MCF 10A (cell line): ENCODE measurements at regions of chr2 and their contacts with region 1.

Region 1: GRCh38 chr2:74250189-74250631 is 51.8 kb downstream of the MTHFD2 start:
- DNase-seq: peak; percentile 49
- H3K4me3 Mint-ChIP-seq: no peak overlapping the region
- H3K27ac Mint-ChIP-seq: no peak overlapping the region
- H3K4me1 Mint-ChIP-seq: peaks cover 5% of the 10 kb centered on the region
- H3K27me3 Mint-ChIP-seq: peaks cover 11% of the 10 kb centered on the region
- CTCF ChIP-seq: peak; percentile 70

Region 2: GRCh38 chr2:74037379-74037860 is 212.8 kb before region 1 on chr2:
- CTCF ChIA-PET with region 1: no interaction called
- POLR2A ChIA-PET with region 1: no interaction called
- intact Hi-C with region 1: no loop called
- DNase-seq: no peak
- H3K4me3 Mint-ChIP-seq: no peak overlapping the region
- H3K27ac Mint-ChIP-seq: peak overlapping the region; percentile 60
- H3K4me1 Mint-ChIP-seq: peaks cover 9% of the 10 kb centered on the region
- H3K27me3 Mint-ChIP-seq: no peaks in the 10 kb centered on the region
- CTCF ChIP-seq: no peak

Region 3: GRCh38 chr2:74238879-74239278 is 11.3 kb before region 1 on chr2:
- CTCF ChIA-PET with region 1: interaction called, 23 read pairs
- POLR2A ChIA-PET with region 1: no interaction called
- intact Hi-C with region 1: no loop called
- DNase-seq: peak; percentile 96
- H3K4me3 Mint-ChIP-seq: no peak overlapping the region
- H3K27ac Mint-ChIP-seq: peak overlapping the region; percentile 42
- H3K4me1 Mint-ChIP-seq: peaks cover 24% of the 10 kb centered on the region
- H3K27me3 Mint-ChIP-seq: no peaks in the 10 kb centered on the region
- CTCF ChIP-seq: no peak

Region 4: DNA sequence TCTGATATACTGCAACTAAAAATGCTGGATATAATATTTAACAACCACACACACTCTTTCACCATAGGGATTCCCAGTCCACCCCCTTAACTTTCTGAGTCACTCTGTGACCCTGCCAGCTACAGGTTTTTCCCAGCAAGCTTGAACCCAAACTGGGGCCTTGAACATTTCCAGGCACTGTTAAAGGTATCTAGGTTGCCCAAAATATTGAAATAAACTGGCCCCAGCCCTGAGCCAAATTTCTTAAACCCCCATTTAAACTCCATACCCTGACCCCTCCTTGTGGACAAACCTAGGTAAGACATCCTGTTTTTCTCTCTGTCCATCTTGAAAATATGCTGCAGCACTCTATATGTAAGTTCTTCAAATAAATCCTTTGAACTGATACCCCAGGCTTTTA is 149.6 kb after region 1 on chr2:
- CTCF ChIA-PET with region 1: interaction called, 6 read pairs
- POLR2A ChIA-PET with region 1: no interaction called
- intact Hi-C with region 1: loop called (anchors 2 kb)
- DNase-seq: peak; percentile 50
- H3K4me3 Mint-ChIP-seq: no peak overlapping the region
- H3K27ac Mint-ChIP-seq: no peak overlapping the region
- H3K4me1 Mint-ChIP-seq: peaks cover 4% of the 10 kb centered on the region
- H3K27me3 Mint-ChIP-seq: no peaks in the 10 kb centered on the region
- CTCF ChIP-seq: peak; percentile 59